ENCODE measurements at regions of chr18 and their contacts with region 1.

Region 1: DNA sequence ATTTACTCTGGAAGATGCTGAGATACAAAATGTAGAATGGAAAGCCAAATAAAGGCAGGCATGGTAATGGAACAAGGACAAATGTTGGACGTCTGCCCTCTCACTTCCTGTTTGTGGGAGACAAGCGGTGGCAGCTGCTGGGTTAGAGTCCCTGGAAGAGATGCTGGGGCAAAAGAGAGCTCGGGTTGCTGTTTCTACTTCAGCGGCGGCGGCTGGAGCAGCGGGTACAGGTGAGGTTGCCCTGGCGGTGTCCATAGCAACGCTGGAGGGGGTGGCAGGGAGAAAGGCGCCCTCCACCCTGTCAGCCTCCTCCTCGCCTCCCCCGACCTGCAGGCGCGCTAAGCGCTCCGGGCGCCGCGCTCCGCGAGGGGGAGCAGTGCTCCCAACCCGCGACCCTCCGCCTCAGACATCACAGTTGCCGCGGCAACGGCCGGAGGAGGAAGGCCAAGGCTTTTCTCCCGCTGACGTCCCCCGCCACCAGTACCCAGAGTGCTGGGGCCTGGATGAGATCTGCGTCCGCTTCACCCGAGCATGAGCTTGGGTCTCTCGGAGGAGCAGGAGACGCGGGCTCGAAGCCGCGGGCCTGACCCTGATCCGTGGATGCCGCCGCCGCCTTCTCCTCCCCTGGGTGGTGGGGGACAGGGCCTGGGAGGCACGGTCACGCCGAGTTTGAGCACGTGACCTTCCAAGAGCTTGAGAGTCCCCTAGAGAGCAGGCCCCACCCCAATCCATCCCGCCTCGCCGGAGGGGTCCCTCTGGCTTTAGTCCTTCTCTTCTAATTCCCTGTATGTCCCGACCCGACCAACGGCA is 65.6 kb downstream of the NOL4 start:
- DNase-seq: peak; percentile 87
- H3K4me3 ChIP-seq: peak overlapping the region; percentile 51; a peak in 3 of 4 replicates
- H3K27ac ChIP-seq: peak overlapping the region in 1 of 2 experiments; percentile 96; a peak in 2 of 4 replicates
- H3K4me1 ChIP-seq: peaks cover 10 to 12% of the 10 kb centered on the region in 2 experiments; a peak in 3 of 4 replicates
- H3K27me3 ChIP-seq: peaks cover 11% of the 10 kb centered on the region; the same call in 1 of the 2 replicates
- CTCF ChIP-seq: peak; percentile 35
- EP300 ChIP-seq: 0 out of 4 replicates have a peak, but pooled peaks of 1 of the 2 experiments have one; percentile 21
- RAD21 ChIP-seq: peak; percentile 47

Region 2: GRCh38 chr18:34128436-34128835 is 30.6 kb before region 1 on chr18:
- CTCF ChIA-PET with region 1: interaction called, 28 read pairs
- POLR2A ChIA-PET with region 1: no interaction called
- DNase-seq: no peak
- H3K4me3 ChIP-seq: no peak overlapping the region
- H3K27ac ChIP-seq: no peak overlapping the region
- H3K4me1 ChIP-seq: no peaks in the 10 kb centered on the region
- H3K27me3 ChIP-seq: no peaks in the 10 kb centered on the region
- CTCF ChIP-seq: no peak
- EP300 ChIP-seq: no peak
- RAD21 ChIP-seq: no peak

Region 3: DNA sequence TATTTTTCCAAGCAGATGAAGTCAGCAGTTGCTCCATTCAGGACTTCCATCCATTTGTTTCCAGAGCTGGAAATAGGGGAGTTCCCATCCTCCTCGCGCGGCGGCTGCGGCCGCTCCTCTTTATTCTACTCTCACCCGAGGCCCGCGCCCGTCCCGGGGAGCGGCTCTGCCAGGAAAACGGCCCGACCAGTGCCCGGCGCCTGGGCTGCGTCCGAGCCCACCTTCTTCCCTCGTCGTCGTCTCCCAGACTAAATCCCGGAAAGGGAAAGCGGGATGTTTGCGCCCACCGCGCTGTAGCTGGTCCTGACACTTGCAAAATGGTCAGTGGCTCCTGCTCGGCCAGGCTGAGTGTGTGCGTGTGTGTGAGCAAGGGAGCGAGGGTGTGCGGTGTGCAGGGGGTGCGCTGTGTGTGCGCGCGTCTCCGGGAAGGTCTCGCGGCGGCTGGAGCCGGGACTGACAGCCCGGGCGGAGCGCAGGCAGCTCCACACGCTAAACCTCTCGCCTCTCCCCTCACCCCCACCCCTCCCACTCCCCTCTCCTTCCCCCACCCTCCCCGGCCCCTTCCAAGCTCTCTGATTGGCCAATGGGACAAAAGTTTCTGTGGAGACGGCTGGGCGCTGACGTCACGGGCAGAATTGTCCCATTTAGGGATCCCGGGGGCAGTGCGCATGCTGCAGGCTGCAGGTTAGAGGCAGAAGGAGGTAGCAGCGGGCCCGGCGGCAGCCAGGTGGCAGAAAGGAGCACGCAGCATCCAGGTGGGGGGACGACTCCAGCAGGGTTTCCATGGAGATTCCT is 65.5 kb after region 1 on chr18 and contains the start of gene NOL4:
- CTCF ChIA-PET with region 1: interaction called, 15 read pairs
- POLR2A ChIA-PET with region 1: interaction called, 16 read pairs
- DNase-seq: peak; percentile 89
- H3K4me3 ChIP-seq: peak within 1 kb of the TSS; percentile 58 to 63
- H3K27ac ChIP-seq: peak within 1 kb of the TSS in 1 of 2 experiments; percentile 97; a peak in 2 of 4 replicates
- H3K4me1 ChIP-seq: peaks cover 0 to 3% of the 10 kb centered on the region in 2 experiments; a peak in 1 of 4 replicates
- H3K27me3 ChIP-seq: peaks cover 37% of the 10 kb centered on the region
- CTCF ChIP-seq: no peak
- EP300 ChIP-seq: no peak
- RAD21 ChIP-seq: peak; percentile 46; the same call in 1 of the 2 replicates
- polyA plus RNA-seq, gene NOL4: 0.07 and 0.49 TPM in 2 replicates